Sigmoid colon (tissue), 7 donors: ENCODE measurements at regions of chr12 and their contacts with region 1.

Region 1: GRCh38 chr12:64696080-64696741 is 63.0 kb downstream of the GNS start:
- DNase-seq: no peak
- H3K4me3 ChIP-seq: no peak overlapping the region
- H3K27ac ChIP-seq: peak overlapping the region; percentile 52 to 92 (median 76)
- H3K4me1 ChIP-seq: peaks cover 0 to 55% (median 46%) of the 10 kb centered on the region in 4 donors
- H3K27me3 ChIP-seq: no peaks in the 10 kb centered on the region
- CTCF ChIP-seq: peak in 3 of 4 experiments; percentile 13 to 31 (median 15)
- EP300 ChIP-seq: no peak
- POLR2A ChIP-seq: no peak

Region 2: DNA sequence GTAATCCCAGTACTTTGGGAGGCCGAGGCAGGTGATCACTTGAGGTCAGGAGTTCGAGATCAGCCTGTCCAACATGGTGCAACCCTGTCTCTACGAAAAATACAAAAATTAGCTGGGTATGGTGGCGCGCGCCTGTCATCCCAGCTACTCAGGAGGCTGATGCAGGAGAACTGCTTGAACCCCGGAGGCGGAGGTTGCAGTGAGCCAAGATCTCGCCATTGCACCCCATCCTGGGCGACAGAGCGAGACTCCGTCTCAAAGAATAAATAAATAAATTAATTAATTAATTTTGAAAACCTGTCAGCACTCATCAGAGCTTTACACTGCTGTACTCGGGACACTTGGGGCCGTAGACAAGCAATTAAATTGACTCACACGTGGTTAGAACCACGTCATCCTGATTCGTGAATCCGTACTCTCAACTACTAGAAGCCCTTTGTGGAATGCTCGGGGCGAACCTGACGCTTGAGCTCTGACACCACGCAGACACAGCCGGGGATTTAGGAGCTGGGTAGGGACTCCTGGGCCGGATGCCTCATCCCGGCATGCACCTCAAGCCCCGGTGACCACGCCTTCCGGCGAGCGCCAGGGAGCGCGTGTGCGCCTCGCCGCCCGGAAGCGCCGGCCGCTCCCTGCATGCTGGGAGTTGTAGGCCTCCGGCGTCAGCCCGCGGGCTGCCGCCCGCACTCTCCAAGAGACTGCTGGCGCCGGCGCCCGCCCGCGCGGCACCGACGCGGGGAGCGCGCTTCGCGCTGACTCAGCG is 292.3 kb before region 1 on chr12 and contains the start of gene XPOT:
- intact Hi-C with region 1: loop called (anchors 10 kb)
- DNase-seq: peak; percentile 97
- H3K4me3 ChIP-seq: peak within 1 kb of the TSS; percentile 85 to 97 (median 94)
- H3K27ac ChIP-seq: peak within 1 kb of the TSS; percentile 96 to 100 (median 98)
- H3K4me1 ChIP-seq: peaks cover 0 to 21% (median 11%) of the 10 kb centered on the region in 4 donors
- H3K27me3 ChIP-seq: no peaks in the 10 kb centered on the region
- CTCF ChIP-seq: no peak
- EP300 ChIP-seq: peak in 2 of 4 donors; percentile 39 to 62
- POLR2A ChIP-seq: no peak
- total RNA-seq, gene XPOT: 26.9 to 33.4 (median 30.1) TPM

Region 3: DNA sequence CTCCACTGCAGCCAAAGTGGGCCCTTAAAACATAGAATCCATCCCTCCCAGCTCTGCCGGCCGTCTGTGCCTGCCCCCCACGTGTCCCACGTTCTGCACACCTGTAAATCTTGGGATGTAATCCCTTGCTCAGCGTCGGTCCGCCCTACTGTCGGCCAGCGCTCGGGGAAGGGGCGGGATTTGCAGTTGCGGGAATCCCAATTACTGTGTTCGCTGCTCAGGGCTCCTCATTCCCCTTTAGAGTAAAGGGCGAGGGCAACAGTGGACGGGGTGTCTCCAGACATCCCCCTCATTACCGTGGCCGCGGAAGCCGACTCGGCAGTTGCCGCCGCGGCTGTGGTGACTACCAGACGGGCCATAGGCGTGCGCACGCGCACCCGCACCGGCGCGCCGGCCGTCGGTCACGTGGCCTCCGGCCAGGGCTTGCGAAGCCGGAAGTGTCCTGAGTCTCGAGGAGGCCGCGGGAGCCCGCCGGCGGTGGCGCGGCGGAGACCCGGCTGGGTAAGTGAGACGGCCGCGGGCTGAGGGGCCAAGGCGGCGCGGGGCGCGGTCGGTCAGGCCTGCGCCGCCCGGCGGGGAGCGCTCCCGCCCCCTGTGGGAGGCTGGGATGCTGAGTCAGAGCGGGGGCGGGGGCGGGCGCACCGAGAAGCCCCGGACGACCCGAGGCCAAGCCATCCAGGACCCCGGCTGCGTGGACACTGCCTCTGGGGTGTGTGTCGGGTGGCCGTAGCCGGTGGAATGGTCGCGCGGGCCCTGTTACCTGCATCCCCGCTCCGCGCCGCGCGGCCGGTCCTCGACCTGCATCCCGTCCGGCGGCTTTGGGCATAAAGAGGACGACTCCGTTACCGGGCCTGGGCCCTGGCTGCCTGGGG is 244.3 kb before region 1 on chr12 and contains the start of gene TBK1:
- intact Hi-C with region 1: loop called (anchors 5 kb)
- DNase-seq: peak; percentile 95
- H3K4me3 ChIP-seq: peak within 1 kb of the TSS; percentile 90 to 99 (median 96)
- H3K27ac ChIP-seq: peak within 1 kb of the TSS; percentile 97 to 100 (median 98)
- H3K4me1 ChIP-seq: peaks cover 0 to 30% (median 15%) of the 10 kb centered on the region in 4 donors
- H3K27me3 ChIP-seq: no peaks in the 10 kb centered on the region
- CTCF ChIP-seq: peak in 1 of 4 experiments; percentile 20
- EP300 ChIP-seq: no peak
- POLR2A ChIP-seq: no peak
- total RNA-seq, gene TBK1: 23.5 to 30.0 (median 27.7) TPM

Region 4: DNA sequence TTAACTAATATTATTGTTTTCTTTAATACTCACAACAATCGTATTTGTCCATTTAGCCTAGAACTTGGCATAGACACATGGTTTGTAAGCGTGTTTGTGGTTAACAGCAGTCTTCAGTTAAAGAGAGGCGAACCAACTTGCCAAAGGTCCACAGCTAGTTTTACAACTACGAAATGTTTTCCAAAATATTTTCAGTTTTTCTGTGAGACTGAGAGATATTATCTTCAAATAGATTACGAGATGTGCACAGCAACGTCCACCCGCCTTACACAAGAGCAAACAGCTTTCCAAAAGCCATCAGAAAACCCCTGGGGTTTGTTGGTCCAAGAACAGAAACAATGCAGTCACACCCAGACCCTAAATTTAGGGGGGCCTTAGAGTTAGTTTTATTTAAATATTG is 144.5 kb before region 1 on chr12:
- intact Hi-C with region 1: loop called (anchors 1 kb)
- DNase-seq: peak; percentile 47
- H3K4me3 ChIP-seq: no peak overlapping the region
- H3K27ac ChIP-seq: no peak overlapping the region
- H3K4me1 ChIP-seq: peaks cover 0 to 6% (median 2%) of the 10 kb centered on the region in 4 donors
- H3K27me3 ChIP-seq: no peaks in the 10 kb centered on the region
- CTCF ChIP-seq: no peak
- EP300 ChIP-seq: no peak
- POLR2A ChIP-seq: no peak

Region 5: DNA sequence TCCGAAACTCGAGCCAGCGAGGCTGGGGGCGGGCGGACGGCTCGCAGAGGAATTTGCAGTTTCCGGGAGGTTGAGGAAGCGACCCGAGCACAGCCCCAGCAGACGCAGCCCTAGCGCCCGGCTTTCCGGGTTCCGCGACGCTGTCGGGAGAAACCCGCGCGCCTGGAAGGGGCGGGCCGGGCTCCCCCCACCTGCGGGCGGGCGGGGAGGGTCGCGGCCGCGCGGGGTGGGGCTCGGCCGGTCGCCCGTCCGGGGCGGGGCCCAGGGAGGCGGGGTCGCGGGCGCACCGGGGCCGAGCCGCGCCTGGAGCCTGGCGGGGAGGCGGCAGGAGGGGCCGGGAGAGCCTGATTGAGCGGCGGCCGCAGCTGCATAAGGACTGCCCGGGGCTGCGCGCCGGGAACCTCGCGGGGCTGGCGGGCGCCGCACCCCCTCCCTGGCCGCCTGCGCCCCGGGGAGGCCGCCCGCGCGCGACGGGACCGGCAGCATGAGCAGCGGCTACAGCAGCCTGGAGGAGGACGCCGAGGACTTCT is 86.0 kb before region 1 on chr12 and contains the start of gene RASSF3:
- intact Hi-C with region 1: loop called (anchors 2 kb)
- DNase-seq: peak; percentile 80
- H3K4me3 ChIP-seq: peak within 1 kb of the TSS; percentile 73 to 90 (median 78)
- H3K27ac ChIP-seq: peak within 1 kb of the TSS; percentile 87 to 92 (median 91)
- H3K4me1 ChIP-seq: peaks cover 0 to 31% (median 23%) of the 10 kb centered on the region in 4 donors
- H3K27me3 ChIP-seq: no peaks in the 10 kb centered on the region
- CTCF ChIP-seq: no peak
- EP300 ChIP-seq: no peak
- POLR2A ChIP-seq: no peak
- total RNA-seq, gene RASSF3: 143 to 348 (median 203) TPM